Activated B cell treated with CpG ODN at 0.5 μM for 24 hours (primary cell): ENCODE measurements at regions of chr7 and their contacts with region 1.

Region 1: GRCh38 chr7:101815835-101816493 is 1.5 kb upstream of the CUX1 start:
- DNase-seq: peak; percentile 74
- ATAC-seq: peak; percentile 77
- H3K4me3 Mint-ChIP-seq: peak overlapping the region; percentile 83
- H3K27ac Mint-ChIP-seq: peak overlapping the region; percentile 65
- H3K4me1 Mint-ChIP-seq: peaks cover 28% of the 10 kb centered on the region
- H3K27me3 Mint-ChIP-seq: no peaks in the 10 kb centered on the region
- CTCF ChIP-seq: no peak

Region 2: GRCh38 chr7:101688183-101688831 is 127.7 kb before region 1 on chr7:
- CTCF ChIA-PET with region 1: interaction called, 10 read pairs
- POLR2A ChIA-PET with region 1: no interaction called
- intact Hi-C with region 1: loop called (anchors 1 kb)
- DNase-seq: peak; percentile 83
- ATAC-seq: peak; percentile 91
- H3K4me3 Mint-ChIP-seq: no peak overlapping the region
- H3K27ac Mint-ChIP-seq: no peak overlapping the region
- H3K4me1 Mint-ChIP-seq: peaks cover 5% of the 10 kb centered on the region
- H3K27me3 Mint-ChIP-seq: peaks cover 4% of the 10 kb centered on the region
- CTCF ChIP-seq: peak; percentile 38

Region 3: GRCh38 chr7:101856473-101857357 is 40.8 kb after region 1 on chr7:
- CTCF ChIA-PET with region 1: interaction called, 4 read pairs
- POLR2A ChIA-PET with region 1: interaction called, 18 read pairs
- intact Hi-C with region 1: loop called (anchors 1 kb)
- DNase-seq: peak; percentile 76
- ATAC-seq: peak; percentile 86
- H3K4me3 Mint-ChIP-seq: peak overlapping the region; percentile 92
- H3K27ac Mint-ChIP-seq: peak overlapping the region; percentile 98
- H3K4me1 Mint-ChIP-seq: peaks cover 74% of the 10 kb centered on the region
- H3K27me3 Mint-ChIP-seq: no peaks in the 10 kb centered on the region
- CTCF ChIP-seq: no peak

Region 4: DNA sequence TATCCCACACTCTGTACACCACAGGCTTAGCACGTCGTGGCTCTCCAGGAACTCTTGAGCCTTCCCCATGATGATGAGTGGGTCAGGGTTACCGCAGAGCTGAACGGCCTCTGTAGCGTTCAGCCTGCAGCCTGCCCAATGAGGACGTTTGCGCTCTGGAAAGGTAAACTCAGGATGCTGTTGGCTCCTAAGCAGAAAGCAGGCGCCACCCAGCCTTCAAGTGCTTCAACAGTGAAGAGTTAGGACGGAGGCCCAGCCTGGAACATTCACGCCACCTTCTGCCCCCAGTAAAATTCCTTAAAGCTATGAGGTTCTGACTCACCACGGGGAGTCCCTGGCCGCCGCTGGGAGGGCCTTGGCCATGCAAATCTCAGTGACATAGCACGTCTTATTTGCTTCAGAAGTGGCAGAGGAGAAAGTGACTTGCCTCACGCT is 309.2 kb after region 1 on chr7:
- CTCF ChIA-PET with region 1: no interaction called
- POLR2A ChIA-PET with region 1: no interaction called
- intact Hi-C with region 1: loop called (anchors 10 kb)
- DNase-seq: peak; percentile 28
- ATAC-seq: peak; percentile 86
- H3K4me3 Mint-ChIP-seq: no peak overlapping the region
- H3K27ac Mint-ChIP-seq: peak overlapping the region; percentile 41
- H3K4me1 Mint-ChIP-seq: peaks cover 21% of the 10 kb centered on the region
- H3K27me3 Mint-ChIP-seq: no peaks in the 10 kb centered on the region
- CTCF ChIP-seq: no peak

Region 5: DNA sequence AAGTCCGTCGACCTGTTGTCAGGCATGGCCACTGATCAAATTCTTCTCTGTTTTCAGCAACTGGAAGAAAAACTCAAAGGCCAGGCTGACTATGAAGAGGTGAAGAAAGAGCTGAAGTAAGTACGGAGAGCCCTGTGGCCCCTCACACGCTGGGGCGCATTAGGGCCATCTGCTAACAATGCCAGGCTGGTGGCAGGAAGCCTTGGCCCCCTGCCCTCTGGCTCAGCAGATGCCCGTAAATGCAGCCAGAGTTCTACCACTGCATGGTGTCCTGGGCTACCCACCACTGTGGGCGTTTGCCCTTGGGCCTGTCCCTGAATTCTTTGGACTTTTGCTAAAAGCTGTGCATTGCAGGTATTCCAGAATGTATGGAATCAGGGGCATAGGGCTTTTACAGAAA is 373.8 kb after region 1 on chr7:
- CTCF ChIA-PET with region 1: no interaction called
- POLR2A ChIA-PET with region 1: no interaction called
- intact Hi-C with region 1: no loop called
- DNase-seq: no peak
- ATAC-seq: no peak
- H3K4me3 Mint-ChIP-seq: no peak overlapping the region
- H3K27ac Mint-ChIP-seq: no peak overlapping the region
- H3K4me1 Mint-ChIP-seq: no peaks in the 10 kb centered on the region
- H3K27me3 Mint-ChIP-seq: no peaks in the 10 kb centered on the region
- CTCF ChIP-seq: no peak

Region 6: DNA sequence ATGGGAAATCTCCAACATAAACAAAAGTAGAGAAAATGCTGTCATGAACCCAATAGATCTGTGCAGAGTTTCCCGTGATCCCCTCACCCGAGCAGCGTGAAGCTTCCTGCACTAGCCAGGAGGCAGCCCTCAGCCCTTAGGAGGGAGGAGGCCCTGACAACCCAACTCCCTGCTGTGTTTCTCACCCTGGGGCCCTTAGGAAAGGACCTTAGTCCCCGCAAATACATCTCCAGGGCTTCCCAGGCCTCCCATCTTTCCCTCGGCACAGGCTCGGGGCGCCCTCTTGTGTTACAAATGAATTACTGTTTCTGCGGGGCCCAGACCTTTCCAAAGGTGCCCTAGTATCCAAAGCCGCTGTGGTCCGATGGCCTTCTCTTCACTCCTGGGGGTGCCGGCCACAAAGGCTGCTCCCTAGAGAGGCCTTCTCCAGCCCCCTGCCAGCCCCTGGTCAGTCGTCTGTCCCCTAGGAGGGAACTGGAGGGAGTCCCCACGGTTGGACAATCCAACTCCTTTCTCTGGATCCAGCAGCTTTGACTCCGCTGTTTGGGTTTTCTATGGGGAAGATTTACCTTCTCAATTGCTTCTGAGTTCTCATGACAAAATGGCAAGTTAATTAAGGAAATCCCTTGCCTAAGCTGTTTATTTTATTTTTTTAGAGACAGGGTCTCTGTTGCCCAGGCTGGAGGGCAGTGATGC is 420.8 kb after region 1 on chr7:
- CTCF ChIA-PET with region 1: no interaction called
- POLR2A ChIA-PET with region 1: no interaction called
- intact Hi-C with region 1: loop called (anchors 2 kb)
- DNase-seq: peak; percentile 39
- ATAC-seq: peak; percentile 70
- H3K4me3 Mint-ChIP-seq: no peak overlapping the region
- H3K27ac Mint-ChIP-seq: no peak overlapping the region
- H3K4me1 Mint-ChIP-seq: no peaks in the 10 kb centered on the region
- H3K27me3 Mint-ChIP-seq: no peaks in the 10 kb centered on the region
- CTCF ChIP-seq: peak; percentile 26